Astrocyte of the cerebellum (primary cell): ENCODE measurements at regions of chr15 and their contacts with region 1.

Region 1: GRCh38 chr15:64180235-64180837 is 17.5 kb upstream of the PPIB start:
- DNase-seq: no peak
- H3K4me3 ChIP-seq: no peak overlapping the region
- CTCF ChIP-seq: no peak

Region 2: GRCh38 chr15:64134345-64134829 is 45.9 kb before region 1 on chr15:
- in situ Hi-C with region 1: no loop called
- DNase-seq: peak; percentile 15
- H3K4me3 ChIP-seq: no peak overlapping the region
- CTCF ChIP-seq: no peak

Region 3: DNA sequence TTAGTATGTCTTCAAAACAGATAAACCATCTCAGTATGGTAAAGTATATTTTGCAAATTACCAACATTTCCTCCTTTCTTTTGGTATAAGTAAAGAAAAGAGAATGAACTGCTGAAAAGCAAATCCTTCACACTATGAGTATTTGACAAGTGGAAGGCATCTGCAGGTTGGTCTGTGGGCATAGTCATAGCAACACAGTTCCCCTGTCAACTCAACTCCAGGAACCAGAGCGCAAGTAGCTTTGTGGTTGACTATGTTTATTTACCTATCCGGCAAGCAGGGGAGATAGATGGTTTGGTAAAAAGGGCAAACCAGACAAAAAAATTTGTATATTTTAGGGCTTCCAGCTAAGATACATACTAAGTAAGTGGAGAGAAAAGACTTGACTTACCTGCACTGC is 70.8 kb after region 1 on chr15:
- in situ Hi-C with region 1: loop called (anchors 5 kb)
- DNase-seq: no peak
- H3K4me3 ChIP-seq: no peak overlapping the region
- CTCF ChIP-seq: no peak